ENCODE measurements at regions of chr1 and their contacts with region 1.

Region 1: DNA sequence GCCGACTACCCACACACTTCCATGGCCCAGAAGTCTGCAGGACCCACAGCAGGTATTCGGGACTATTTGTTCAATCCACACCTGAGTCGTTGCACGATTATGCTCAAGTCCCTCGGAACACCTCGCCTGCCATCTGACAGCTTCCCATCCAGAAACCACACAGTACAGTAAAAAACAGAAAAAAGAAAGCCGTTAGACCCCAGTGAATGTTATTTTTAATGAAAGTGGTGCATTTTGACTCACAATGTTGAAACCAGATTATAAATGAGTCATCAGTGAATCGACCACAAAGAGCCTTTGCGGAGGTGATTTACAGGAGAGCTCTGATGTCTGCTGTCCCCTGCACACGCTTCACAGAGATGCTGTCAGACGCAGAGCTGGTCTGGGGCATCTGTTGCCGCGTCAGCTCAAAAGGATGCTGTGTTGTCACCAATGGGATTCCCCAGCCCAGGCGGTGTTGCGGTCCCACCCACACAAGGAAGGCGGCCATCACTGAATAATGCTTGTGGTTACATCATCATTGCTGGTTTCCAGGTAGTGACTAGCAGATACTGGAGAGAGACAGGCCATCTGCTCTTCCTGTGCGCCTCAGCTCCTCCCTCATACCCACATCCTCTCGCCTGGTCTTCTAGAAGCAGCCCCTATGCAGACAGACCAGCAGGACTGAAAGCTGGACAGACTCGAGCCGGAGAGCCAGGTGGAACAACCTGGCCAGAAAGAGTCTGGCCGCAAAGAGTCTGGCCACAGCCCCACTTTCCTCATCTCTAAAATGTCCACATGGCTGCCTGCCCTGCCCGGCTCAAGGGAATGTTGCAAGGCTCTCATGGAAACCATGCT is 116.8 kb downstream of the TOMM20 start:
- DNase-seq: peak; percentile 81 to 100 (median 90)
- ATAC-seq: peak; percentile 91
- H3K4me3 ChIP-seq: peak overlapping the region; percentile 11 to 47
- H3K4me3 Mint-ChIP-seq: peak overlapping the region; percentile 73
- H3K27ac ChIP-seq: peak overlapping the region; percentile 64 to 87
- H3K27ac Mint-ChIP-seq: peak overlapping the region; percentile 94
- H3K4me1 ChIP-seq: peaks cover 30% of the 10 kb centered on the region
- H3K4me1 Mint-ChIP-seq: peaks cover 54% of the 10 kb centered on the region
- H3K27me3 ChIP-seq: no peaks in the 10 kb centered on the region
- H3K27me3 Mint-ChIP-seq: no peaks in the 10 kb centered on the region
- CTCF ChIP-seq: no peak

Region 2: DNA sequence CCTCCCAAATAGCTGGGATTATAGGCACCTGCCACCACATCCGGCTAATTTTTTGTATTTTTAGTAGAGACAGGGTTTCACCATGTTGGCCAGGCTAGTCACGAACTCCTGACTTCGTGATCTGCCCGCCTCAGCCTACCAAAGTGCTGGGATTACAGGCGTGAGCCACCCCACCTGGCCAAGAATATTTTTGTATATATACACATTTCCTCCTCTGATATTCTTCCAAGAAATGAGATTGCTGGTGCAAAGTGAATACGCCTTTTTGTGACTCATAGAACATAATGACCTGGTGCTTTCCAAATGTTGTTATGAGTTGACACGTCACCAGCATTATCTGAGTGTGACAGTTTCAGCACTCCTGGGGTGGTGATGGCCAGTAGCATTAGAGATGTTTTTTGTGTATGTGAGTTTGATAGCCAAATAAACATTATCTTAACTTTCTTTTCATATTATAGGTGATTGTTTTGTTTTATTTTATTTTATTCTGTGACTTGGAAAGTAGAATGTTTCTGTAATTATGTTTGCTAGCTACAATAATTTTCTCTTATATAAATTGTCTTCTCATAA is 1343.0 kb before region 1 on chr1:
- CTCF ChIA-PET with region 1: no interaction called
- POLR2A ChIA-PET with region 1: no interaction called
- intact Hi-C with region 1: no loop called
- DNase-seq: no peak
- ATAC-seq: no peak
- H3K4me3 ChIP-seq: no peak overlapping the region
- H3K4me3 Mint-ChIP-seq: no peak overlapping the region
- H3K27ac ChIP-seq: no peak overlapping the region
- H3K27ac Mint-ChIP-seq: no peak overlapping the region
- H3K4me1 ChIP-seq: no peaks in the 10 kb centered on the region
- H3K4me1 Mint-ChIP-seq: no peaks in the 10 kb centered on the region
- H3K27me3 ChIP-seq: peaks cover 0 to 4% of the 10 kb centered on the region in 2 experiments
- H3K27me3 Mint-ChIP-seq: peaks cover 6% of the 10 kb centered on the region
- CTCF ChIP-seq: no peak

Region 3: DNA sequence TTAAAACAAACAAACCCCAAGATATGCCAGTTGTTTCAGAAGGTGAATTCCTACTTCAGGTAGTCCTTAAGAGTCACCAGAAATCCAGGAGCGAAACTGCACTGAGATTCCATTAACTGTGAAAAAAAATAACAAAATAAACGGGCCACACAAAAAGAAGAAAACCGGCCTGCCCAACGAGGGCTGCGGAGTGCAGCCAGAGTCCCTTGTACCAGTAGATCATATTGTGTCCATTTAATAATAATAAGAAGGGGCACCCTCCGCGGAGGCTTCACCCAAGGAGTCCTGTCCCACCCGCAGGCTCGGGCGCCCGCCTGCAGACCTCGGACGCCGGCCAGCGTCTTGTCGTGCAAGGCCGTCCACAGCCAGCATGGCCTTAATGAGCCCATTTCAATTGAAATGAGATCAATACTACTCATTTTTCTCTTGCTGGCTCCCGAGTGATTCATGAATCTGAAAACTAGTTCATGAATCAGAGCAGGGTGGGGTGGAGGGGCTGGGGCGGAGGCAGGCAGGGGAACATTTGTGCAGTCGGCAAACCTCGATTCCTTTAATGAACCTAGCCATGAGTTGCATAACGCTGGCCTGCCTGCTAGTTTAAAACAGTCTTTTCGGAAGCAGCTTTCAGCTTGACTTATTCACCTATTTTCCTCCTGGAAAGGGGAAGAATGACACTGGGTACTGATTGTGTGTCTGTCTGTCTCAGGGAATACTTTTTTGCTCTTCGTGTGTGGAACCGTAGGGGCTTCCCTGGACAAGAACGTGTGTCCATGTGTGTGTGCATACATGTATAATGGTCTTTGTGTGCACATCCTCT is 288.7 kb before region 1 on chr1:
- CTCF ChIA-PET with region 1: no interaction called
- POLR2A ChIA-PET with region 1: interaction called, 11 read pairs
- intact Hi-C with region 1: loop called (anchors 1 to 2 kb)
- DNase-seq: peak in 8 of 9 experiments; percentile 37 to 76 (median 58)
- ATAC-seq: peak; percentile 26
- H3K4me3 ChIP-seq: peak overlapping the region; percentile 28 to 34
- H3K4me3 Mint-ChIP-seq: peak overlapping the region; percentile 71
- H3K27ac ChIP-seq: peak overlapping the region; percentile 83 to 96
- H3K27ac Mint-ChIP-seq: peak overlapping the region; percentile 92
- H3K4me1 ChIP-seq: peaks cover 38% of the 10 kb centered on the region
- H3K4me1 Mint-ChIP-seq: peaks cover 61% of the 10 kb centered on the region
- H3K27me3 ChIP-seq: no peaks in the 10 kb centered on the region
- H3K27me3 Mint-ChIP-seq: no peaks in the 10 kb centered on the region
- CTCF ChIP-seq: no peak

Region 4: GRCh38 chr1:234772345-234773147 is 239.3 kb before region 1 on chr1:
- CTCF ChIA-PET with region 1: no interaction called
- POLR2A ChIA-PET with region 1: no interaction called
- intact Hi-C with region 1: loop called (anchors 1 kb)
- DNase-seq: peak; percentile 59 to 95 (median 85)
- ATAC-seq: peak; percentile 80
- H3K4me3 ChIP-seq: peak overlapping the region in 1 of 2 experiments; percentile 23
- H3K4me3 Mint-ChIP-seq: peak overlapping the region; percentile 66
- H3K27ac ChIP-seq: peak overlapping the region; percentile 39 to 73
- H3K27ac Mint-ChIP-seq: peak overlapping the region; percentile 94
- H3K4me1 ChIP-seq: peaks cover 58% of the 10 kb centered on the region
- H3K4me1 Mint-ChIP-seq: peaks cover 54% of the 10 kb centered on the region
- H3K27me3 ChIP-seq: no peaks in the 10 kb centered on the region
- H3K27me3 Mint-ChIP-seq: no peaks in the 10 kb centered on the region
- CTCF ChIP-seq: no peak

Region 5: GRCh38 chr1:234851450-234852438 is 160.1 kb before region 1 on chr1:
- CTCF ChIA-PET with region 1: no interaction called
- POLR2A ChIA-PET with region 1: no interaction called
- intact Hi-C with region 1: no loop called
- DNase-seq: peak in 1 of 9 experiments; percentile 31
- ATAC-seq: no peak
- H3K4me3 ChIP-seq: no peak overlapping the region
- H3K4me3 Mint-ChIP-seq: no peak overlapping the region
- H3K27ac ChIP-seq: no peak overlapping the region
- H3K27ac Mint-ChIP-seq: no peak overlapping the region
- H3K4me1 ChIP-seq: no peaks in the 10 kb centered on the region
- H3K4me1 Mint-ChIP-seq: peaks cover 12% of the 10 kb centered on the region
- H3K27me3 ChIP-seq: no peaks in the 10 kb centered on the region
- H3K27me3 Mint-ChIP-seq: no peaks in the 10 kb centered on the region
- CTCF ChIP-seq: no peak

Region 6: DNA sequence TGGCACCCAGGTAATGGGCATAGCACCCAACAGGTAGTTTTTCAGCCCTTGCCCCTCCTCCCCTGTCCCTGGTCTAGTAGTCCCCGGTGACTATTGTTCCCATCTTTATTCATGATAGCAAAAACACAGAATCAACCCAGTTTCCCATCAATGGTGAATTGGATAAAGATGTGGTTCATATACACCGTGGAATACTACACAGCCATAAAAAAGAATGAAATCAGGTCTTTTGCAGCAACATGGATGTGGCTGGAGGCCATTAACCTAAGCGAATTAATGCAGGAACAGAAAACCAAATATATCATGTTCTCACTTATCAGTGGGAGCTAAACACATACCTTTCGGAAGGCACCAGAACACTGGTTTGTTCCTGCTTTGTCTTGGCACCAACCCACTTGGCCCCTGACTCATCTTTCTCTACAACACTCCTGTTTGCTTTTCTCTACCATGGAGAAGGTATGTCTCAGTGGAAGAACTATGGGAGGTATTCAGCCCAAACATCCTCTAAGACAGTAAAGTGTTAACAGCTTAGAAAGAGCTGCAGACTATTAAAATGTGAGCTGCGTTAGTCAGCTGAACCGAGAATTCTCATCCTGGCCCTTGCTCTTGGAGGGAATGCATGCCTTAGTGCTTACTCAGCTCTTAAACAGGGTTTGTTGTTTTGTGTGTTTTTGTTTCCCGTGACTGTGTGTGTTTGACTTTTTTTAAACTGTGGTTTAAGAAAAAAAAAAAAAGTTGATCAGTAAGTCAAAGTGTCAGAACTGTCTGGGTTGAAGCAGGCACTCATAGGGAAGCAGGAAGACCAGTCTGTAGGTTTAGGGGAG is 86.2 kb before region 1 on chr1:
- CTCF ChIA-PET with region 1: no interaction called
- POLR2A ChIA-PET with region 1: no interaction called
- intact Hi-C with region 1: loop called in 1 of 2 experiments (anchors 5 kb)
- DNase-seq: peak in 3 of 9 experiments; percentile 47 to 70 (median 56)
- ATAC-seq: peak; percentile 60
- H3K4me3 ChIP-seq: peak overlapping the region in 1 of 2 experiments; percentile 36
- H3K4me3 Mint-ChIP-seq: peak overlapping the region; percentile 70
- H3K27ac ChIP-seq: peak overlapping the region in 1 of 2 experiments; percentile 38
- H3K27ac Mint-ChIP-seq: peak overlapping the region; percentile 74
- H3K4me1 ChIP-seq: peaks cover 44% of the 10 kb centered on the region
- H3K4me1 Mint-ChIP-seq: peaks cover 45% of the 10 kb centered on the region
- H3K27me3 ChIP-seq: no peaks in the 10 kb centered on the region
- H3K27me3 Mint-ChIP-seq: no peaks in the 10 kb centered on the region
- CTCF ChIP-seq: no peak

Region 7: GRCh38 chr1:234978397-234979295 is 33.2 kb before region 1 on chr1:
- CTCF ChIA-PET with region 1: interaction called, 3 read pairs
- POLR2A ChIA-PET with region 1: interaction called, 7 read pairs
- intact Hi-C with region 1: loop called (anchors 2 to 5 kb)
- DNase-seq: peak in 6 of 9 experiments; percentile 29 to 76 (median 62)
- ATAC-seq: peak; percentile 77
- H3K4me3 ChIP-seq: peak overlapping the region in 1 of 2 experiments; percentile 11
- H3K4me3 Mint-ChIP-seq: peak overlapping the region; percentile 66
- H3K27ac ChIP-seq: peak overlapping the region in 1 of 2 experiments; percentile 3
- H3K27ac Mint-ChIP-seq: peak overlapping the region; percentile 93
- H3K4me1 ChIP-seq: peaks cover 35% of the 10 kb centered on the region
- H3K4me1 Mint-ChIP-seq: peaks cover 47% of the 10 kb centered on the region
- H3K27me3 ChIP-seq: no peaks in the 10 kb centered on the region
- H3K27me3 Mint-ChIP-seq: no peaks in the 10 kb centered on the region
- CTCF ChIP-seq: no peak

Region 8: GRCh38 chr1:235030919-235031596 is 19.2 kb after region 1 on chr1:
- CTCF ChIA-PET with region 1: no interaction called
- POLR2A ChIA-PET with region 1: no interaction called
- intact Hi-C with region 1: no loop called
- DNase-seq: no peak
- ATAC-seq: no peak
- H3K4me3 ChIP-seq: no peak overlapping the region
- H3K4me3 Mint-ChIP-seq: no peak overlapping the region
- H3K27ac ChIP-seq: no peak overlapping the region
- H3K27ac Mint-ChIP-seq: no peak overlapping the region
- H3K4me1 ChIP-seq: no peaks in the 10 kb centered on the region
- H3K4me1 Mint-ChIP-seq: peaks cover 2% of the 10 kb centered on the region
- H3K27me3 ChIP-seq: no peaks in the 10 kb centered on the region
- H3K27me3 Mint-ChIP-seq: no peaks in the 10 kb centered on the region
- CTCF ChIP-seq: no peak

Region 9: GRCh38 chr1:235648954-235649367 is 637.1 kb after region 1 on chr1:
- CTCF ChIA-PET with region 1: no interaction called
- POLR2A ChIA-PET with region 1: no interaction called
- intact Hi-C with region 1: no loop called
- DNase-seq: peak; percentile 20 to 86 (median 61)
- ATAC-seq: peak; percentile 74
- H3K4me3 ChIP-seq: peak overlapping the region; percentile 24 to 35
- H3K4me3 Mint-ChIP-seq: peak overlapping the region; percentile 85
- H3K27ac ChIP-seq: no peak overlapping the region
- H3K27ac Mint-ChIP-seq: peak overlapping the region; percentile 83
- H3K4me1 ChIP-seq: peaks cover 19% of the 10 kb centered on the region
- H3K4me1 Mint-ChIP-seq: peaks cover 13% of the 10 kb centered on the region
- H3K27me3 ChIP-seq: peaks cover 10 to 25% of the 10 kb centered on the region in 2 experiments
- H3K27me3 Mint-ChIP-seq: peaks cover 58% of the 10 kb centered on the region
- CTCF ChIP-seq: no peak